Right lobe of liver (tissue), 6 donors: ENCODE measurements at regions of chr7 and their contacts with region 1.

Region 1: GRCh38 chr7:148962823-148963582 is 65.3 kb downstream of the PDIA4 start:
- DNase-seq: peak; percentile 60 to 65 (median 64)
- ATAC-seq: peak; percentile 82 to 86 (median 84)
- H3K4me3 ChIP-seq: peak overlapping the region; percentile 38 to 65 (median 56)
- H3K27ac ChIP-seq: peak overlapping the region; percentile 61 to 70 (median 69)
- H3K4me1 ChIP-seq: peaks cover 0 to 12% (median 0%) of the 10 kb centered on the region in 4 donors
- H3K27me3 ChIP-seq: no peaks in the 10 kb centered on the region
- CTCF ChIP-seq: peak; percentile 61 to 83 (median 76)
- POLR2A ChIP-seq: no peak

Region 2: DNA sequence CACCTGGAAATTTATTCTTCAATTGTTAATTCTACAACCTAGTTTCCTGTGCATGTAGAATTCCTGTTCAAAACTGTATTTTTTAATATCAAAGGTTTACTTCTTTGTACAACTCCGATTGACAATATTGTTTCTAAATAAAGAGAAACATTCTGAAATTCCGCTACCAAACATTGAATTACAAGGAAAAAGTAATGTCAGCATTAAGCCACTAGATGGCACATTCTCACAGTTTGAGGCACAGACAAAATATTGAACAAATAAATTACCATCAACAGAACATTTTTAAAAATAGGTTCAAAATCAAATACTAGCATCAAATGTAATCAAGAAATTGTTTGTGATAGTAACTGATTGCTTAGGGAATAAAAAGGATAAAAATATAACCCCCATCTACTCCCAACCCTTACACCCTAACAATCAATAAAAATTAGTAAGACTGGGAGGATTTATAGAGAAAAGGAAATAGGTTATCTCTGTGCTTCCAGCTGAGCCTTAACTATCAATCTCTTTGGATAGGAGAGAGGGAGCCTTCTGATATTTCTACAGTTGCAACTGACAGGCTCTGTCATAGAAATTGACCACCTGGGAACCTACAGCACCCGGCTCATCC is 459.0 kb before region 1 on chr7:
- intact Hi-C with region 1: loop called (anchors 5 to 10 kb)
- DNase-seq: no peak
- ATAC-seq: peak; percentile 46 to 67 (median 52)
- H3K4me3 ChIP-seq: no peak overlapping the region
- H3K27ac ChIP-seq: no peak overlapping the region
- H3K4me1 ChIP-seq: no peaks in the 10 kb centered on the region
- H3K27me3 ChIP-seq: no peaks in the 10 kb centered on the region
- CTCF ChIP-seq: peak; percentile 71 to 78 (median 74)
- POLR2A ChIP-seq: no peak

Region 3: DNA sequence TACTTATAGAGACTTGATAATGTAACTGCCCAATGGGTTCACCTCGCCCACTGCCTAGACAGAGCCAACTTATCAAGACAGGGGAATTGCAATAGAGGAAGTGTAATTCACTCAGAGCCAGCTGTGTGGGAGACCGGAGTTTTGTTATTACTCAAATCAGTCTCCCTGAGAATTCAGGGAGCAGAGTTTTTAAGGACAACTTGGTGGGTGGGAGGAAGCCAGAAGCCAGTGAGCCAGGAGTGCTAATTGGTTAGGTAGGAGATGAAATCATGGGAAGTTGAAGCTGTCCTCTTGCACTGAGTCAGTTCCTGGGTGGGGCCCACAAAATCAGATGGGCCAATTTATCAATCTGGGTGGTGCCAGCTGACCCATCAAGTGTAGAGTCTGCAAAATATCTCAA is 392.5 kb before region 1 on chr7:
- intact Hi-C with region 1: loop called in 1 of 2 experiments (anchors 5 kb)
- DNase-seq: no peak
- ATAC-seq: no peak
- H3K4me3 ChIP-seq: no peak overlapping the region
- H3K27ac ChIP-seq: no peak overlapping the region
- H3K4me1 ChIP-seq: peaks cover 0 to 10% (median 2%) of the 10 kb centered on the region in 4 donors
- H3K27me3 ChIP-seq: no peaks in the 10 kb centered on the region
- CTCF ChIP-seq: no peak
- POLR2A ChIP-seq: no peak